ENCODE measurements at regions of chr2 and their contacts with region 1.

Region 1: DNA sequence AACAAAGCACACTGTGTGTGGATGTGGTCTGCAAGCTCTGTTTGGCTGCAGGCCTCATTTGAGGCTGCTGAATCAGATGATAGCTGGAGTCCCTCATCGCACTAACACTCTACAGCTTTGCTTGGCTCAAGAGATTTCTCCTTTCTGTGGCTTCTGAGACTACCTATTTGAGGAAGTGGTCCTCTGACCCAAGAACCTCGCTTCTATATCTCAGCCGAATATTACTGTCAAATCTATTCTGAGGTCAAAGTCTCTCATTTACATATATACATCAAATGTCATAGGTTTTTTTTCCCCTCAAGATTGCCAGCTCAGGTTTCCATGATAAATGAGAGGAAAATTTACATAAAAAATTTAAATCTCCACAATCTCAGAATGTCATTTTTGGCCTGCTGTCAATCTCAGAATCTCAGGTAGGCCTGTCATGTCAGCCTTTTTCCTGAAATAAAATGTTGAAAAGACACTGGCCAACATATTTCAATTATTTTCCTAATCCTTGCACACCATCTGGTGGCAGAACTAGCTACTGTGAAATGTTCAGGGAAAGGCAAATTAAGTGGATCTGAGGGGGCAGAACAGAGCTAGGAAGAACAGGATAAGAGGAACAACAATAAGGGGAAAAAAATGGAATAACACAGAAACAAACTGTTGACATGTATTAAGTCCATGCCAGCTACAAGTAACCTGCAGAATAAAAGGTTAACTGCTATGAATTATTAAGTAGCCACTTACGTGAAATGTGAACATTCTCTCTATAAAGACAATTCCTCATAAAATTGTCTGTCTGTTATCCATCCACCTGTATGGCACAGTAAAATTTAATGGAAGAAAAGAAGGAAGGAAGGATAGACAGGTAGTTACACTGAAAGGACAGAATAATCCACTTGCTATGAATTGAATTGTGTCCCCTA is 39.3 kb downstream of the AP1S3 start:
- DNase-seq: no peak
- H3K4me3 Mint-ChIP-seq: peak overlapping the region; percentile 23
- H3K27ac Mint-ChIP-seq: peak overlapping the region; percentile 96
- H3K4me1 Mint-ChIP-seq: peaks cover 78% of the 10 kb centered on the region
- H3K27me3 Mint-ChIP-seq: no peaks in the 10 kb centered on the region
- CTCF ChIP-seq: peak; percentile 48

Region 2: DNA sequence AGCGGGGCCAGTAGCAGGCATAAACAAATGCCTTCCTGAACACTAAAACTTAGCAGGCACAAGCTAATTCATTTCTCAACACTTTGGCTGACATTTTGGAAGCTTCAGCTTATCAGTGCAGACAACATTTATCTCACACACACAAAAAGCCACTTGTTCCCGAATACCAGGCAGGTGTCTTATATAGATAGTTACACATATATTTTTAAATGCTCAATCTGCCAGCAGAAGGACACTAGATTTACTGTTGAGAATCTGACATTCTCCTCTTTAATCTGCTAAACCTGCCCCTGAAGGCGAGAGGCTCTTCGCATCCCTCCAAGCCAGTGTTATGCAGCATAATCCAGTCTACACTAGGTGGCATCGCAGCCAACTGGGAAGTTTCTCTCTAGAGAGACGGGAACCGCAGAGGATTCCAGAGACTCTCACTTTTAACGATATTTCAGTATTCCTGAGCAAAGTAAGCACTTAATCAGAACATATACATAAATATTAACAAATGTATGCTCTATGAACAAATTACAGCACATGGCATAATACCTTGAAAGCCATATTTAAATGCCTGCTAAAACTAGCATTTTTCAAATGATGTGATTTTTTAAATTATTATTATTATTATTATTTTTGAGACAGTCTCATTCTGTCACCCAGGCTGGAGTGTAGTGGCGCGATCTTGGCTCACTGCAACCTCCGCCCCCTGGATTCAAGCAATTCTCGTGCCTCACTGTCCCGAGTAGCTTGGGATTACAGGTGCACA is 105.7 kb before region 1 on chr2:
- CTCF ChIA-PET with region 1: interaction called, 8 read pairs
- intact Hi-C with region 1: loop called (anchors 2 kb)
- DNase-seq: peak; percentile 63
- H3K4me3 Mint-ChIP-seq: no peak overlapping the region
- H3K27ac Mint-ChIP-seq: no peak overlapping the region
- H3K4me1 Mint-ChIP-seq: peaks cover 38% of the 10 kb centered on the region
- H3K27me3 Mint-ChIP-seq: no peaks in the 10 kb centered on the region
- CTCF ChIP-seq: peak; percentile 55

Region 3: DNA sequence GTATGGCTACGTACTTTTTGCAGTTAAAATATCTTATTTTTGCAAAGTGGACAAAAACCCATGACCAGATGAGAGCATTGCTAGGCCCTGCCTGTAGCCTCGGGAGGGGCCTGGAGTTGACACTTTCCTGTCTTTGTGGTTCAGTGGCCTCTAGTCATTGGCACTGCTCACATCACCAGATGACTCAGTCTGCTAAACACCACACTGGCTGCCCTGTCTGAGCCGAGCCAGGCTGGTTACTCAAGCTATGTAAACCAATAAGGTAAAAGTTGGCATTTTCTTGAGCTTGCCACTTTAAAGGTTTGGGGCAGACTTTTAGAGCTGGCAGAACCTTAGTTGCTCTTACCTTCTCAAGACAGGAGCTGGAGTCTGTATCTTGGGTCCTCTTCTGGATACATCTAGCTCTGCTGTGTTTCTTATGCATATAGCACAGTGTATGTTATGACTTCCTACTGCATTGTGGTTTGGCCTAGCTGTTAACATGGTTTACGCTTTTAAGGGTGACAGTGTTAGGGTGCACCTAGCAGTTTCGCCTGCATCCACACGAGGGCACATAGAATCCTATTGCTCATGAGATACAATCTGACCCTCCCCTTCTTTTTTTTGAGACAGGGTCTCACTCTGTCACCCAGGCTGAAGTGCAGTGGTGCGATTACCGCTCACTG is 37.1 kb before region 1 on chr2:
- CTCF ChIA-PET with region 1: interaction called, 43 read pairs
- intact Hi-C with region 1: loop called (anchors 1 kb)
- DNase-seq: peak; percentile 83
- H3K4me3 Mint-ChIP-seq: no peak overlapping the region
- H3K27ac Mint-ChIP-seq: peak overlapping the region; percentile 99
- H3K4me1 Mint-ChIP-seq: peaks cover 52% of the 10 kb centered on the region
- H3K27me3 Mint-ChIP-seq: no peaks in the 10 kb centered on the region
- CTCF ChIP-seq: peak; percentile 52

Region 4: DNA sequence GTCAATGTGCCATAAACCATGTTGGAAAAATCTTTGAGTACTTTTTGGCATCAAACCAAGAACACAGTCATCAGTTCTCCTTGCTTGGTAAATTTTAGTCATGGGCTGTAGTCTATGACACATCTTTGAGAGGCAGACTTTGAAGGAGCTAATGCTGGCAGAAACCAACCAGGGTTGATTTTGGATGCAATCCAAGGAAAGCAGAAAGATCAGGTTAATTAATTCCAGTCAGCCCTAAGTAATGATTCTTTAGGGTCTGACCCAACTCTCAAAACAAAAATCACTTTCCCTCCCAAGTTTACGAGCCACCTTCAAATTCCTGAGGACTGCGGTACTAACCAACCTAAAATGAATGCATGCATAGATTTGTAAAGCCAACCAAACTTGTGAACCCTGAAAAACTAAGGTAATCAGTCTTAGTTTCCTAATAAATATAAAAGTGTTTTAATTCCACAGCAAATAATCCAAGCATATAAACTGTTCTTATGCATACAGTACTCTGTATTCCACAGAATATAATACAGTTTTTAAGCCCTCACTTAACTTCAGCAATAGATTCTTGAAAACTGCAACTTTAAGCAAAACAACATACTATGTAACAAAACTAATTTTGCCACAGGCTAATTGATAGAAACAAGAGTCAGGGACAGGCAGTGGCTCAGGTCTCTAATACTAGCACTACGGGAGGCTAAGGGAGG is 17.3 kb after region 1 on chr2:
- CTCF ChIA-PET with region 1: interaction called, 10 read pairs
- intact Hi-C with region 1: loop called (anchors 2 kb)
- DNase-seq: peak; percentile 73
- H3K4me3 Mint-ChIP-seq: peak overlapping the region; percentile 33
- H3K27ac Mint-ChIP-seq: peak overlapping the region; percentile 92
- H3K4me1 Mint-ChIP-seq: peaks cover 54% of the 10 kb centered on the region
- H3K27me3 Mint-ChIP-seq: no peaks in the 10 kb centered on the region
- CTCF ChIP-seq: no peak

Region 5: GRCh38 chr2:223860809-223861738 is 63.0 kb after region 1 on chr2:
- CTCF ChIA-PET with region 1: interaction called, 11 read pairs
- intact Hi-C with region 1: loop called (anchors 2 kb)
- DNase-seq: peak; percentile 90
- H3K4me3 Mint-ChIP-seq: peak overlapping the region; percentile 61
- H3K27ac Mint-ChIP-seq: peak overlapping the region; percentile 96
- H3K4me1 Mint-ChIP-seq: peaks cover 69% of the 10 kb centered on the region
- H3K27me3 Mint-ChIP-seq: no peaks in the 10 kb centered on the region
- CTCF ChIP-seq: no peak

Measured in Calu3 (cell line).